Activated CD8-positive, alpha-beta T cell treated with anti-CD3 and anti-CD28 coated beads, Interleukin-2, amount 10 ng/mL, durations not matched to agents 7 days and 5 days (primary cell): ENCODE measurements at regions of chr12 and their contacts with region 1.

Region 1: GRCh38 chr12:108803428-108804105 is 53.8 kb downstream of the SSH1 start:
- DNase-seq: peak; percentile 81
- ATAC-seq: peak; percentile 90
- H3K4me3 Mint-ChIP-seq: no peak overlapping the region
- H3K27ac Mint-ChIP-seq: no peak overlapping the region
- H3K4me1 Mint-ChIP-seq: peaks cover 13% of the 10 kb centered on the region
- H3K27me3 Mint-ChIP-seq: no peaks in the 10 kb centered on the region

Region 2: DNA sequence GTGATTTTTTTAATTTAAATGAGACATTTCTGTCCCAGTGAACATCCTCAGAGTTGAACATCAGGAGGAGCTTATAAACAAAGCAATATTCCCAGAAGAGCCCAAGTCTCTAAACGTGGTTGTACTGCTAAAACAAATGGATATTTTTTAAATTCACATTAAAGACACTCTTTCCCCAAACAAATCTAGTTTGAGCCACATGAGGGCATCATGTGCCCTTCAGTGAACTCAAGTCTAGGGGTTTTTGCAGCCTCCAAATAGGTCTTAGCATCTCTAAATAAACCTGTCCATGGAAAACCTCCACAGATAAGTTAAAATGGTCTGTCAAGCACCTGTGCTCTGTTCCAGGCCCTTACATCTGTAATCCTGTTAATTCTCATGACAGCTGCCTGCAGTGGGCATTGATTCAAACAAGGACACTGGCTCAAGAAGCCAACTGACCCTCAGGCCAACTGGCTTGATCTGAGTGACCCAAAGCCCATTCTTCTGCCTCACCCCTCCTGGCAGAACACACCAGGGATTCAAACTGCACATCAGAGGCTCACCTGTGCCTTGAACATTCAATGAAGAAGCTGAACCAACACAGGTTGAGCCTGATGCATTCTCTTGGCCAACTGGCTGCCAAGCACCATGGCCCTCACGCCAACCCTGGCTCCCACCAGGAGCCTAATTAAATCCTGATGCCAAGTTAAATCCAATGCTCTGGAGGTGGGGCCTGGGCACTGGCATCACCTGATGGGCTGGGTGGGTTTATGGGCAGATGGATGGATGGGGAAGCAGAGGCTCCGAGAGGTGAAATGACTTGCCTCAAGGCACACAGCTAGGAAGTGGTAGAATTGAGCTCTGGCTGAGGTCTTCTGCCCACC is 232.6 kb before region 1 on chr12:
- CTCF ChIA-PET with region 1: interaction called, 30 read pairs
- POLR2A ChIA-PET with region 1: no interaction called
- DNase-seq: peak; percentile 33
- ATAC-seq: no peak
- H3K4me3 Mint-ChIP-seq: no peak overlapping the region
- H3K27ac Mint-ChIP-seq: peak overlapping the region; percentile 40
- H3K4me1 Mint-ChIP-seq: peaks cover 79% of the 10 kb centered on the region
- H3K27me3 Mint-ChIP-seq: no peaks in the 10 kb centered on the region

Region 3: GRCh38 chr12:108633534-108634248 is 169.9 kb before region 1 on chr12 and contains the start of gene SELPLG:
- CTCF ChIA-PET with region 1: interaction called, 31 read pairs
- POLR2A ChIA-PET with region 1: no interaction called
- DNase-seq: peak; percentile 92
- ATAC-seq: peak; percentile 59
- H3K4me3 Mint-ChIP-seq: peak within 1 kb of the TSS; percentile 100
- H3K27ac Mint-ChIP-seq: peak within 1 kb of the TSS; percentile 99
- H3K4me1 Mint-ChIP-seq: peaks cover 63% of the 10 kb centered on the region
- H3K27me3 Mint-ChIP-seq: no peaks in the 10 kb centered on the region
- total RNA-seq, gene SELPLG: 144 to 150 TPM

Region 4: GRCh38 chr12:108678104-108678730 is 125.3 kb before region 1 on chr12:
- CTCF ChIA-PET with region 1: no interaction called
- POLR2A ChIA-PET with region 1: no interaction called
- DNase-seq: no peak
- ATAC-seq: no peak
- H3K4me3 Mint-ChIP-seq: no peak overlapping the region
- H3K27ac Mint-ChIP-seq: no peak overlapping the region
- H3K4me1 Mint-ChIP-seq: peaks cover 12% of the 10 kb centered on the region
- H3K27me3 Mint-ChIP-seq: no peaks in the 10 kb centered on the region

Region 5: GRCh38 chr12:108691175-108691997 is 112.2 kb before region 1 on chr12:
- CTCF ChIA-PET with region 1: interaction called, 27 read pairs
- POLR2A ChIA-PET with region 1: no interaction called
- DNase-seq: peak; percentile 84
- ATAC-seq: peak; percentile 81
- H3K4me3 Mint-ChIP-seq: peak overlapping the region; percentile 64
- H3K27ac Mint-ChIP-seq: peak overlapping the region; percentile 87
- H3K4me1 Mint-ChIP-seq: peaks cover 64% of the 10 kb centered on the region
- H3K27me3 Mint-ChIP-seq: no peaks in the 10 kb centered on the region

Region 6: DNA sequence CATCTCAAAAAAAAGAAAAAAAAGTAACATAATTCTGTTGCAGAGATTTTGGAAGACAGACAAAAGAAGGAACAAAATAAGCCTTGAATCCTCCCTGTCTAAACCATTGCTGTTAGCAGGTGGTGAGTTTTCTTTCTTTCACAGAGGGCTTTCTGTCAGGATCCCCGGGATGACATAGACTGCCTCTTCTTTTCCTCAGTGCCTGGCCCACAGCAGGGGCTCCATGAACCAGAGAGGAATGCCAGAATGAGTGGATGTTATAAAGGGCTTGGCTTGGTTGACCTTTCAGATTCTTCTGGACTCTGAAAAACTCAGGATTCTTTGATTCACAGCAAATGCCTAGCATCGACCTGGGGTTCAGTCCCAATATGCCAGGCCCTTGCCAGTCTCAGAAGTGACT is 26.4 kb before region 1 on chr12:
- CTCF ChIA-PET with region 1: no interaction called
- POLR2A ChIA-PET with region 1: no interaction called
- DNase-seq: no peak
- ATAC-seq: no peak
- H3K4me3 Mint-ChIP-seq: no peak overlapping the region
- H3K27ac Mint-ChIP-seq: no peak overlapping the region
- H3K4me1 Mint-ChIP-seq: no peaks in the 10 kb centered on the region
- H3K27me3 Mint-ChIP-seq: peaks cover 2% of the 10 kb centered on the region

Region 7: GRCh38 chr12:108950991-108951739 is 147.6 kb after region 1 on chr12:
- CTCF ChIA-PET with region 1: interaction called, 20 read pairs
- POLR2A ChIA-PET with region 1: no interaction called
- DNase-seq: peak; percentile 81
- ATAC-seq: peak; percentile 92
- H3K4me3 Mint-ChIP-seq: no peak overlapping the region
- H3K27ac Mint-ChIP-seq: no peak overlapping the region
- H3K4me1 Mint-ChIP-seq: peaks cover 7% of the 10 kb centered on the region
- H3K27me3 Mint-ChIP-seq: peaks cover 23% of the 10 kb centered on the region